CD8-positive, alpha-beta T cell (primary cell): ENCODE measurements at regions of chr12 and their contacts with region 1.

Region 1: GRCh38 chr12:75480469-75480949 is at the start of gene GLIPR1:
- DNase-seq: peak; percentile 43 to 89 (median 76)
- ATAC-seq: peak; percentile 79
- H3K4me3 ChIP-seq: peak within 1 kb of the TSS; percentile 51 to 60
- H3K4me3 Mint-ChIP-seq: peak within 1 kb of the TSS; percentile 98
- H3K27ac ChIP-seq: peak within 1 kb of the TSS; percentile 69 to 92
- H3K27ac Mint-ChIP-seq: peak within 1 kb of the TSS; percentile 98
- H3K4me1 ChIP-seq: peaks cover 57% of the 10 kb centered on the region
- H3K4me1 Mint-ChIP-seq: peaks cover 81% of the 10 kb centered on the region
- H3K27me3 ChIP-seq: no peaks in the 10 kb centered on the region
- H3K27me3 Mint-ChIP-seq: no peaks in the 10 kb centered on the region
- CTCF ChIP-seq: no peak
- total RNA-seq, gene GLIPR1: 20.8 to 23.1 TPM

Region 2: GRCh38 chr12:74537707-74538385 is 942.7 kb before region 1 on chr12 and contains the start of gene ATXN7L3B:
- CTCF ChIA-PET with region 1: no interaction called
- POLR2A ChIA-PET with region 1: interaction called, 3 read pairs
- intact Hi-C with region 1: loop called in 1 of 2 experiments (anchors 10 kb)
- DNase-seq: peak; percentile 92 to 97 (median 96)
- ATAC-seq: peak; percentile 94
- H3K4me3 ChIP-seq: peak within 1 kb of the TSS; percentile 80 to 86
- H3K4me3 Mint-ChIP-seq: peak within 1 kb of the TSS; percentile 88
- H3K27ac ChIP-seq: peak within 1 kb of the TSS; percentile 94 to 96
- H3K27ac Mint-ChIP-seq: peak within 1 kb of the TSS; percentile 95
- H3K4me1 ChIP-seq: peaks cover 43% of the 10 kb centered on the region
- H3K4me1 Mint-ChIP-seq: peaks cover 53% of the 10 kb centered on the region
- H3K27me3 ChIP-seq: no peaks in the 10 kb centered on the region
- H3K27me3 Mint-ChIP-seq: no peaks in the 10 kb centered on the region
- CTCF ChIP-seq: no peak
- total RNA-seq, gene ATXN7L3B: 31.9 to 33.2 TPM

Region 3: GRCh38 chr12:75390899-75391538 is 89.5 kb before region 1 on chr12 and contains the start of gene GLIPR1L2:
- CTCF ChIA-PET with region 1: interaction called, 11 read pairs
- POLR2A ChIA-PET with region 1: interaction called, 17 read pairs
- intact Hi-C with region 1: loop called (anchors 1 to 5 kb)
- DNase-seq: peak; percentile 77 to 96 (median 85)
- ATAC-seq: peak; percentile 88
- H3K4me3 ChIP-seq: peak within 1 kb of the TSS; percentile 70 to 72
- H3K4me3 Mint-ChIP-seq: peak within 1 kb of the TSS; percentile 91
- H3K27ac ChIP-seq: peak within 1 kb of the TSS; percentile 70 to 90
- H3K27ac Mint-ChIP-seq: peak within 1 kb of the TSS; percentile 95
- H3K4me1 ChIP-seq: peaks cover 26% of the 10 kb centered on the region
- H3K4me1 Mint-ChIP-seq: peaks cover 46% of the 10 kb centered on the region
- H3K27me3 ChIP-seq: no peaks in the 10 kb centered on the region
- H3K27me3 Mint-ChIP-seq: no peaks in the 10 kb centered on the region
- CTCF ChIP-seq: peak; percentile 53
- total RNA-seq, gene GLIPR1L2: not detected

Region 4: DNA sequence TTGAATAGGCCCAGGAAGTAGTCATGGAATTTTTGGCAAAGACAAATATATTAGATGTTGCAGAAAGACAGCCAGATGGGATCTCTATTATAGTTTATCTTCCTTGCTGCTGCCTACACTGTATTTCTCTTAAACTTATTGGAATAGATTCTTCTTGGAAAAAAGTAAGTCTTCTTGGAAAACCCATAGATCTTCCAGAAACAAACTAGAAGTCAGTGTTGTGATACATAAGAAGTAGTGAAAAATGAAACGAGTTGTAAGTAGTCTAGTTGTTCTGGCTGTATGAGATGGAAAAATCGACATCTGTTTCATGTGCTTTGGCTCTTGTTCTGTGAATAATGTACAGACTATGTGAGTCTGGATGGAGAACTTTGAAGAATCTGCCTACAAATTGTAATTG is 60.7 kb before region 1 on chr12:
- CTCF ChIA-PET with region 1: no interaction called
- POLR2A ChIA-PET with region 1: no interaction called
- intact Hi-C with region 1: no loop called
- DNase-seq: no peak
- ATAC-seq: no peak
- H3K4me3 ChIP-seq: no peak overlapping the region
- H3K4me3 Mint-ChIP-seq: no peak overlapping the region
- H3K27ac ChIP-seq: no peak overlapping the region
- H3K27ac Mint-ChIP-seq: no peak overlapping the region
- H3K4me1 ChIP-seq: no peaks in the 10 kb centered on the region
- H3K4me1 Mint-ChIP-seq: no peaks in the 10 kb centered on the region
- H3K27me3 ChIP-seq: no peaks in the 10 kb centered on the region
- H3K27me3 Mint-ChIP-seq: peaks cover 2% of the 10 kb centered on the region
- CTCF ChIP-seq: no peak

Region 5: DNA sequence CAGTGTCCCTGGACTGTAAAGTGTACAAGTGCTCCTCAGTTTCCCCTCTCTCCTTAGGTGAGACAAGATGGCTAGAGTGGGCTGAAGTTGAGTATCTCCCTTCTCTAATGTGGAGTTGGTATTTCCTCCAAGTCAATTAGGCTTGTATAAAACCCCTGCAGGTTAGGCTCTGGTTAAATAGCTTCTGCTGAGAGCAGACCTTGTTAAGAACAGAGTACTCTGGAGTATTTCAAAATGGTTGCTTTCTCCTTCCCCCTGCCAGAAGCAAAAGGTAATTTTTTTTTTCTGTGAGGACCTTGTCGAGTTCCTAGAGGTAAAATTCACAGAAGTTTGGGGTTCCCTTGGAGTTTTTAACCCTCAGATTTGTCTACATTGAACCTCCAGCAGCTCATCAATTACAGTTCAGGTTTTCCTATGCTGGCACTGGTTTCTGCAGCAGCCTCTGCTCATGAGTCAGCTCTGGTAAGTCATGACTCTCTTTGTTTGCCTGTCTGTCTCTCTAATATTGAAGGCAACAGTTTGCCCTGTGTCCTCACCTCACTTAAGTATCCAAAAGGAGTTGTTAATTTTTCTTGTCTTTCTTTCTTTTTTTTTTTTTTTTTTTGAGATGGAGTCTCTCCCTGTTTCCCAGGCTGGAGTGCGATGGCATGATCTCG is 27.7 kb before region 1 on chr12:
- CTCF ChIA-PET with region 1: interaction called, 11 read pairs
- POLR2A ChIA-PET with region 1: interaction called, 7 read pairs
- intact Hi-C with region 1: no loop called
- DNase-seq: no peak
- ATAC-seq: no peak
- H3K4me3 ChIP-seq: no peak overlapping the region
- H3K4me3 Mint-ChIP-seq: no peak overlapping the region
- H3K27ac ChIP-seq: no peak overlapping the region
- H3K27ac Mint-ChIP-seq: no peak overlapping the region
- H3K4me1 ChIP-seq: peaks cover 15% of the 10 kb centered on the region
- H3K4me1 Mint-ChIP-seq: peaks cover 20% of the 10 kb centered on the region
- H3K27me3 ChIP-seq: no peaks in the 10 kb centered on the region
- H3K27me3 Mint-ChIP-seq: no peaks in the 10 kb centered on the region
- CTCF ChIP-seq: no peak

Region 6: DNA sequence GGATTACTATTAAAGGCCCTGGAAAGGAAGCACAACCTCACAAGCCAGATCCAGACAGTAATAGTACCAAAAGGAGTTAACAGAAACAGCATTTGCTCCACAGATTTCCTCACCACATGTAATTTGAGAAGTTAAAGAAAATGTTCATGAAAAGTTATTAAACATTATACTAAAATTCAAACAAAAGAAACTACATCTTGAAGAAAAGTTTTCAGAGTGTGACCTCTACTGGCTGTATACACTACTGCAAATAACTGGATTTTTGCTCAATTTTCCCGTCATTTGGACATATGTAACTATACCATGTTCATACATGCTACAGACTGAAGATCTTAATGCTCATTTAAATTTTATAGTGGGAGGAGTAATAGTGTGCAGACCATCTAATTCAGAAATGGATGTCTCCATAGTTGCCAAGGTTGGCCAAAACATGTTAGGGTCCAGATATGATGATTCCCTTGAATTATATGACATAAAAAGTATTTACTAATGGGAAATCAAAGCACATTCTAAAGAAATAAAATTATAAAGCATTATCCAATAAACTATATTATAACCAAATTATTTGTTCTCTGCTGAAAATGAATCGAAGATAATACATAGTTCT is 25.3 kb after region 1 on chr12:
- CTCF ChIA-PET with region 1: interaction called, 35 read pairs
- POLR2A ChIA-PET with region 1: interaction called, 26 read pairs
- intact Hi-C with region 1: loop called (anchors 1 to 2 kb)
- DNase-seq: peak in 2 of 9 experiments; percentile 41 to 55
- ATAC-seq: peak; percentile 63
- H3K4me3 ChIP-seq: no peak overlapping the region
- H3K4me3 Mint-ChIP-seq: no peak overlapping the region
- H3K27ac ChIP-seq: no peak overlapping the region
- H3K27ac Mint-ChIP-seq: no peak overlapping the region
- H3K4me1 ChIP-seq: peaks cover 13% of the 10 kb centered on the region
- H3K4me1 Mint-ChIP-seq: peaks cover 26% of the 10 kb centered on the region
- H3K27me3 ChIP-seq: no peaks in the 10 kb centered on the region
- H3K27me3 Mint-ChIP-seq: no peaks in the 10 kb centered on the region
- CTCF ChIP-seq: peak; percentile 84

Region 7: DNA sequence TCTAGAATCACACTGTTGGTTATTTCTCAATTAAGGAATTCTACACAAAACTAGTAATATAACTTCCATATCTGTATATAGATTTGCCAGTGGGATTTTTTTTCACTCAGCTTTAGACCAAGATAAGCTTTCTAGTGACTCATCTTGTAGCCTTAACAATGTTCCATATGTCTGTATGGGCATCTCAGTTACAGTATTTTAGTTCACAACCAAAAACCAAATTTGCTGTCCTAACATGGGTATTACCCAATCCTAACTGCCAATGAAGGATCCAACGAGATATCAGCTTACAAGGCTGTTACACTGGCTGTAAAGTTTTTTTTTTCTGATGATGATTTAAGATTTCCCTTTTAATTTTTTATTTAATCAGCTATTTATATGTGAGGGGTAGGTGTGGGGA is 62.4 kb after region 1 on chr12:
- CTCF ChIA-PET with region 1: no interaction called
- POLR2A ChIA-PET with region 1: no interaction called
- intact Hi-C with region 1: no loop called
- DNase-seq: no peak
- ATAC-seq: no peak
- H3K4me3 ChIP-seq: no peak overlapping the region
- H3K4me3 Mint-ChIP-seq: no peak overlapping the region
- H3K27ac ChIP-seq: no peak overlapping the region
- H3K27ac Mint-ChIP-seq: no peak overlapping the region
- H3K4me1 ChIP-seq: no peaks in the 10 kb centered on the region
- H3K4me1 Mint-ChIP-seq: no peaks in the 10 kb centered on the region
- H3K27me3 ChIP-seq: no peaks in the 10 kb centered on the region
- H3K27me3 Mint-ChIP-seq: peaks cover 14% of the 10 kb centered on the region
- CTCF ChIP-seq: no peak

Region 8: DNA sequence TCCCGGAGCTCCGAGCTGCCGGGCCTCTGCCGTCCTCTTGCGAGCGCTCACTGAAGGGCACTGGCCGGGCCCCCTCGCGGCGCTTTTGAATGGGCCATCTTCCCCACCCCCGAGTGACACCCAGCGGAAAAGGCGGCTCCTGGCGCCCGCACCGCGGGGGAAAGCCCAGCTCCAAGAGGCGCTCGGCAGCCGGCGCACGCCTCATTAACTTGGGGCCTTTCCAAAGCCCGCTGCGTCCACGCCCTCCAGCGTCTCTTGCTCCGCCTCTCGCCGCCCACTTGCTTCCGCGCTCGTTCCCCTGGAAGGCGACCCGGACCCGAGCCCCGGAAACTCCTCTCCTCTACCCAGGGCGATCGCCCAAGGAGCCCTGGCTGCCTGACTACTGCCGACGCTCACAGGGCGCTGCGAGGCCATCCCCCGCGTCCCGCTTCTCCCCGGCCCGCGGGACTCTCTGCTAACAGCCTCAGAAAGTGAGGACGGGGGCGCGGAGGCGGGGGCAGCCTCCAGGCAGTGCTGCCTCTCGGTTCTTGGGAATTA is 551.1 kb after region 1 on chr12 and contains the start of gene PHLDA1:
- CTCF ChIA-PET with region 1: interaction called, 3 read pairs
- POLR2A ChIA-PET with region 1: interaction called, 3 read pairs
- intact Hi-C with region 1: loop called in 1 of 2 experiments (anchors 5 kb)
- DNase-seq: peak; percentile 78 to 96 (median 88)
- ATAC-seq: peak; percentile 85
- H3K4me3 ChIP-seq: peak within 1 kb of the TSS; percentile 73 to 81
- H3K4me3 Mint-ChIP-seq: peak within 1 kb of the TSS; percentile 94
- H3K27ac ChIP-seq: peak within 1 kb of the TSS; percentile 63 to 76
- H3K27ac Mint-ChIP-seq: peak within 1 kb of the TSS; percentile 80
- H3K4me1 ChIP-seq: peaks cover 20% of the 10 kb centered on the region
- H3K4me1 Mint-ChIP-seq: peaks cover 28% of the 10 kb centered on the region
- H3K27me3 ChIP-seq: no peaks in the 10 kb centered on the region
- H3K27me3 Mint-ChIP-seq: peaks cover 2% of the 10 kb centered on the region
- CTCF ChIP-seq: peak; percentile 40
- total RNA-seq, gene PHLDA1: 5.6 to 5.8 TPM

Region 9: GRCh38 chr12:76763743-76764675 is 1283.5 kb after region 1 on chr12 and contains the start of gene ZDHHC17:
- CTCF ChIA-PET with region 1: no interaction called
- POLR2A ChIA-PET with region 1: interaction called, 3 read pairs
- intact Hi-C with region 1: loop called in 1 of 2 experiments (anchors 10 kb)
- DNase-seq: peak; percentile 89 to 96 (median 93)
- ATAC-seq: peak; percentile 82
- H3K4me3 ChIP-seq: peak within 1 kb of the TSS; percentile 73 to 99
- H3K4me3 Mint-ChIP-seq: peak within 1 kb of the TSS; percentile 98
- H3K27ac ChIP-seq: peak within 1 kb of the TSS; percentile 87 to 94
- H3K27ac Mint-ChIP-seq: peak within 1 kb of the TSS; percentile 99
- H3K4me1 ChIP-seq: peaks cover 26% of the 10 kb centered on the region
- H3K4me1 Mint-ChIP-seq: peaks cover 47% of the 10 kb centered on the region
- H3K27me3 ChIP-seq: no peaks in the 10 kb centered on the region
- H3K27me3 Mint-ChIP-seq: no peaks in the 10 kb centered on the region
- CTCF ChIP-seq: no peak
- total RNA-seq, gene ZDHHC17: 38.1 to 40.3 TPM

Region 10: GRCh38 chr12:76915361-76916169 is 1435.1 kb after region 1 on chr12:
- CTCF ChIA-PET with region 1: no interaction called
- POLR2A ChIA-PET with region 1: no interaction called
- intact Hi-C with region 1: no loop called
- DNase-seq: no peak
- ATAC-seq: no peak
- H3K4me3 ChIP-seq: no peak overlapping the region
- H3K4me3 Mint-ChIP-seq: no peak overlapping the region
- H3K27ac ChIP-seq: no peak overlapping the region
- H3K27ac Mint-ChIP-seq: no peak overlapping the region
- H3K4me1 ChIP-seq: no peaks in the 10 kb centered on the region
- H3K4me1 Mint-ChIP-seq: peaks cover 4% of the 10 kb centered on the region
- H3K27me3 ChIP-seq: no peaks in the 10 kb centered on the region
- H3K27me3 Mint-ChIP-seq: peaks cover 2% of the 10 kb centered on the region
- CTCF ChIP-seq: no peak